K562 (cell line): ENCODE measurements at regions of chr11 and their contacts with region 1.

Region 1: GRCh38 chr11:117226388-117227385 is 5.2 kb downstream of the PCSK7 start:
- DNase-seq: peak; percentile 61 to 87 (median 69)
- ATAC-seq: peak; percentile 83
- H3K4me3 ChIP-seq: no peak overlapping the region
- H3K27ac ChIP-seq: no peak overlapping the region
- H3K4me1 ChIP-seq: peaks cover 35 to 41% of the 10 kb centered on the region in 2 experiments; a peak in 4 of 5 replicates
- H3K27me3 ChIP-seq: no peaks in the 10 kb centered on the region
- CTCF ChIP-seq: peak; percentile 83 to 88 (median 84)
- EP300 ChIP-seq: no peak
- POLR2A ChIP-seq: no peak
- RAD21 ChIP-seq: peak; percentile 81 to 88

Region 2: GRCh38 chr11:116732271-116733042 is 494.2 kb before region 1 on chr11:
- CTCF ChIA-PET with region 1: interaction called, 3 read pairs
- POLR2A ChIA-PET with region 1: no interaction called
- in situ Hi-C with region 1: no loop called
- intact Hi-C with region 1: loop called (anchors 1 kb)
- DNase-seq: peak; percentile 79 to 93 (median 88)
- ATAC-seq: peak; percentile 97
- H3K4me3 ChIP-seq: no peak overlapping the region
- H3K27ac ChIP-seq: no peak overlapping the region
- H3K4me1 ChIP-seq: no peaks in the 10 kb centered on the region
- H3K27me3 ChIP-seq: peaks cover 19 to 49% of the 10 kb centered on the region in 2 experiments; a peak in 4 of 5 replicates
- CTCF ChIP-seq: peak; percentile 82 to 86 (median 82)
- EP300 ChIP-seq: no peak
- POLR2A ChIP-seq: no peak
- RAD21 ChIP-seq: peak; percentile 40 to 77; a peak in 3 of 4 replicates

Region 3: GRCh38 chr11:116787786-116788486 is 438.8 kb before region 1 on chr11 and contains the start of gene ZPR1:
- CTCF ChIA-PET with region 1: interaction called, 4 read pairs
- POLR2A ChIA-PET with region 1: interaction called, 3 read pairs
- in situ Hi-C with region 1: no loop called
- intact Hi-C with region 1: loop called (anchors 5 kb)
- DNase-seq: peak; percentile 83 to 93 (median 90)
- ATAC-seq: peak; percentile 87
- H3K4me3 ChIP-seq: peak within 1 kb of the TSS; percentile 98
- H3K27ac ChIP-seq: peak within 1 kb of the TSS; percentile 60
- H3K4me1 ChIP-seq: peaks cover 22 to 33% of the 10 kb centered on the region in 2 experiments; a peak in 4 of 5 replicates
- H3K27me3 ChIP-seq: no peaks in the 10 kb centered on the region
- CTCF ChIP-seq: no peak; a peak in 1 of 6 replicates
- EP300 ChIP-seq: no peak
- POLR2A ChIP-seq: peak; percentile 83
- RAD21 ChIP-seq: no peak
- polyA plus RNA-seq, gene ZPR1: 13.0 to 17.2 TPM

Region 4: DNA sequence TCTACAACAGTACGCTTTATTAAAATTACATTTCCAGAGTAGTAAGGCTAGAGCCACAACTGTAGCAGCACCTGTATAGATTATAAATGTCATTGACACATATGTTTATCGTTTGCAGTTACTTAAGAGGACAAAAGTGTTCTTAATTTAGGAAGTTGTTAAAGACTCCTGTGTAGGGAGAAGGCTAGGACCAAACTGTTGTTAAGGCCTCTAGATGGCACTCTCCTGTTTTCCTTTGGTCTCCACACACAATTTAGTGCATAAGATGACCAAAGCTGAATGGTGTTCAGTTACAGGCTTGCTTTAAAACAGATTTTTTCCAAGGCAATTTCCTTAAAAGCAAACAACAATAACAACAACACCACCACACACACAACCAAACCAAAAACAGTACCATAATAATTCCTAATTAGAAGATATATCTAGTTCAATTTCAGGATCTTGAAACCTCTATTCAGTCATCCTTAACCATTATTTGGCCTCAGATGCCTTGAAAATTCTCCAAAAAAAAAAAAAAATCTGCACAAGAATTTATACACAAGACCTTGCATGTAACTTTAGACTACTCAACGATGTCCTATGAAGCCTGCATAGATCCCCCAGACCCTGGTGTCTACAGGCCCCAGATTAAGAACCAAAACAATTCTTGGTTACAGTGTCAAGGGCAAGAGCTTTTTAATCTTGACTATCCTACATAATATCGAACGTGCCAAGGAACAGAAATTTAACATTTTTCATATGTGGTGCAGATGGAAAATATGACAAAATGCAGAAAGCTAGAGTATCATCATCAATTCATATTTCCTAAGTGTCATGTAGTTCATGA is 346.7 kb before region 1 on chr11:
- CTCF ChIA-PET with region 1: interaction called, 4 read pairs
- POLR2A ChIA-PET with region 1: no interaction called
- in situ Hi-C with region 1: loop called (anchors 10 kb)
- intact Hi-C with region 1: loop called (anchors 5 kb)
- DNase-seq: peak in 3 of 4 experiments; percentile 34 to 66 (median 48)
- ATAC-seq: peak; percentile 97
- H3K4me3 ChIP-seq: no peak overlapping the region
- H3K27ac ChIP-seq: no peak overlapping the region
- H3K4me1 ChIP-seq: no peaks in the 10 kb centered on the region
- H3K27me3 ChIP-seq: no peaks in the 10 kb centered on the region
- CTCF ChIP-seq: peak; percentile 64 to 78 (median 67); a peak in 5 of 6 replicates
- EP300 ChIP-seq: no peak
- POLR2A ChIP-seq: no peak
- RAD21 ChIP-seq: peak; percentile 78 to 83

Region 5: GRCh38 chr11:117107701-117108590 is 118.7 kb before region 1 on chr11:
- CTCF ChIA-PET with region 1: no interaction called
- POLR2A ChIA-PET with region 1: no interaction called
- in situ Hi-C with region 1: no loop called
- intact Hi-C with region 1: loop called (anchors 2 kb)
- DNase-seq: no peak
- ATAC-seq: no peak
- H3K4me3 ChIP-seq: no peak overlapping the region
- H3K27ac ChIP-seq: no peak overlapping the region
- H3K4me1 ChIP-seq: peaks cover 0 to 7% of the 10 kb centered on the region in 2 experiments; a peak in 2 of 5 replicates
- H3K27me3 ChIP-seq: no peaks in the 10 kb centered on the region; a peak in 1 of 5 replicates
- CTCF ChIP-seq: no peak
- EP300 ChIP-seq: no peak
- POLR2A ChIP-seq: no peak
- RAD21 ChIP-seq: no peak

Region 6: GRCh38 chr11:117143871-117144476 is 82.7 kb before region 1 on chr11 and contains the start of gene PAFAH1B2:
- CTCF ChIA-PET with region 1: no interaction called
- POLR2A ChIA-PET with region 1: no interaction called
- in situ Hi-C with region 1: no loop called
- intact Hi-C with region 1: loop called (anchors 1 kb)
- DNase-seq: peak; percentile 97 to 99 (median 97)
- ATAC-seq: peak; percentile 95
- H3K4me3 ChIP-seq: peak within 1 kb of the TSS; percentile 89
- H3K27ac ChIP-seq: peak within 1 kb of the TSS; percentile 88
- H3K4me1 ChIP-seq: peaks cover 12 to 18% of the 10 kb centered on the region in 2 experiments; a peak in 4 of 5 replicates
- H3K27me3 ChIP-seq: no peaks in the 10 kb centered on the region
- CTCF ChIP-seq: no peak
- EP300 ChIP-seq: no peak
- POLR2A ChIP-seq: peak; percentile 95
- RAD21 ChIP-seq: no peak
- polyA plus RNA-seq, gene PAFAH1B2: 27.8 to 81.6 TPM

Region 7: DNA sequence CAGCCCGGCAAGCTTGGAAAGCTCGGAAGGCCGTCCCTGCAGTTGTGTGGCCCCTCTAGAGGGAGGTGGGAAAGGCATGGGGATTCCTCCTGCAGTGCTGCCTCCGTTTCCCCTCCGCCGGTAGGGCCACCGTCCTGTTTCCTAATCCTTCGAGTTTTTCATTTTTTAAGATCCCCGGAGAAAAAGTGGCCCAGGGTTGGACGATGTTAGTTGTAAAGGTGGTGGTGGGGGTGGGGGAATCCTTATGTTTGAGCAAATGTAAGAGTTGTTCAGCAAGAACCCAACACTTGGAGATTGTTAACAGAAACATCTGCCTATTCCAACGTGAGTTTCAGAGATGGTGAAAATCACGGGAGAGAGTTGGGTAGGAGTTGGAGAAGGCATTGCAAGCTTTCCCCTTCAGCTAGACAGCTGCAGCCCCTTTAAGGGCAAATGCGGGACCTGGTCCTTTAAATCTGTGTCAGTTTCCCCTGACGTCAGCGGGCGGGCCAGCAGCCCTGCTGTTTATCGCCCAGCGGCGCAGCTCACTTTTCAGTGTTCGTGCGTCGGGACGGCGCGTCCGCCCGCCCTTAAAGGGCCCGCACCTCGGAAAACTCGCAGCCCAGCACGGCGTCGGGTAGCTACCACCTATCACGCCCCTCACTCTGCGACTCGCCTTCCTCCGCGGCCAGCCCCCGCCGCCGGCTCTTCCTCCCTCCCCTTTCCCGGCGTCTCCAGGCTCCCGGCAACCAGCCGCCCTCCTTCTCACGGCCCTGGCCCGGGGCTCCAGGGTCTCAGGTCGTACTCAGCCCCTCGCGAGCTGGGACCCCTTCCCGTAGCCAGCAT is 48.3 kb before region 1 on chr11 and contains the start of gene SIDT2:
- CTCF ChIA-PET with region 1: interaction called, 12 read pairs
- POLR2A ChIA-PET with region 1: interaction called, 8 read pairs
- in situ Hi-C with region 1: no loop called
- intact Hi-C with region 1: loop called (anchors 1 kb)
- DNase-seq: peak; percentile 86 to 95 (median 88)
- ATAC-seq: peak; percentile 94
- H3K4me3 ChIP-seq: peak within 1 kb of the TSS; percentile 49
- H3K27ac ChIP-seq: peak within 1 kb of the TSS; percentile 70
- H3K4me1 ChIP-seq: peaks cover 30 to 46% of the 10 kb centered on the region in 2 experiments
- H3K27me3 ChIP-seq: no peaks in the 10 kb centered on the region
- CTCF ChIP-seq: peak in 1 of 3 experiments; percentile 7; a peak in 1 of 6 replicates
- EP300 ChIP-seq: no peak
- POLR2A ChIP-seq: peak; percentile 62
- RAD21 ChIP-seq: no peak
- polyA plus RNA-seq, gene SIDT2: 2.4 to 3.6 TPM